Activated CD4-positive, alpha-beta T cell treated with anti-CD3 and anti-CD28 coated beads for 36 hours (primary cell): ENCODE measurements at regions of chr1 and their contacts with region 1.

Region 1: GRCh38 chr1:168439456-168440375 is 104.1 kb downstream of the XCL2 start:
- DNase-seq: peak; percentile 89
- ATAC-seq: peak; percentile 95
- H3K4me3 Mint-ChIP-seq: peak overlapping the region; percentile 42
- H3K27ac Mint-ChIP-seq: no peak overlapping the region
- H3K4me1 Mint-ChIP-seq: peaks cover 32% of the 10 kb centered on the region
- H3K27me3 Mint-ChIP-seq: no peaks in the 10 kb centered on the region

Region 2: DNA sequence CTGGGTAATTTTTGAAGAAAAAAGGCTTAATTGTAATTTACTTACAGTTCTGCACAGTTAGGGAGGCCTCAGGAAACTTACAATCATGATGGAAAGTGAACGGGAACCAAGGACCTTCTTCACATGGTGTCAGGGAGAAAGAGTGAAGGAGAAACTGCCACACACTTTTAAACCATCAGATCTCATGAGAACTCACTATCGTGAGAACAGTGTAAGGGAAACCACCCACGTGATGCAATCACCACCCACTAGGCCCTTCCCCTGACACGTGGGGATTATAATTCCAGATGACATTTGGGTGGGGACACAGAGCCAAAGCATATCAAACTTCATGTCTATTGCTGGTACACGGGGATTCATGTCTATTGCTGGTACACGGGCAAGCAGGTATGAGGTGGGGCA is 219.2 kb before region 1 on chr1:
- CTCF ChIA-PET with region 1: no interaction called
- POLR2A ChIA-PET with region 1: no interaction called
- intact Hi-C with region 1: no loop called
- DNase-seq: peak; percentile 41
- ATAC-seq: peak; percentile 58
- H3K4me3 Mint-ChIP-seq: peak overlapping the region; percentile 61
- H3K27ac Mint-ChIP-seq: peak overlapping the region; percentile 72
- H3K4me1 Mint-ChIP-seq: peaks cover 20% of the 10 kb centered on the region
- H3K27me3 Mint-ChIP-seq: peaks cover 5% of the 10 kb centered on the region

Region 3: GRCh38 chr1:168287237-168287664 is 152.5 kb before region 1 on chr1:
- CTCF ChIA-PET with region 1: no interaction called
- POLR2A ChIA-PET with region 1: no interaction called
- intact Hi-C with region 1: no loop called
- DNase-seq: no peak
- ATAC-seq: peak; percentile 96
- H3K4me3 Mint-ChIP-seq: no peak overlapping the region
- H3K27ac Mint-ChIP-seq: no peak overlapping the region
- H3K4me1 Mint-ChIP-seq: peaks cover 20% of the 10 kb centered on the region
- H3K27me3 Mint-ChIP-seq: no peaks in the 10 kb centered on the region

Region 4: DNA sequence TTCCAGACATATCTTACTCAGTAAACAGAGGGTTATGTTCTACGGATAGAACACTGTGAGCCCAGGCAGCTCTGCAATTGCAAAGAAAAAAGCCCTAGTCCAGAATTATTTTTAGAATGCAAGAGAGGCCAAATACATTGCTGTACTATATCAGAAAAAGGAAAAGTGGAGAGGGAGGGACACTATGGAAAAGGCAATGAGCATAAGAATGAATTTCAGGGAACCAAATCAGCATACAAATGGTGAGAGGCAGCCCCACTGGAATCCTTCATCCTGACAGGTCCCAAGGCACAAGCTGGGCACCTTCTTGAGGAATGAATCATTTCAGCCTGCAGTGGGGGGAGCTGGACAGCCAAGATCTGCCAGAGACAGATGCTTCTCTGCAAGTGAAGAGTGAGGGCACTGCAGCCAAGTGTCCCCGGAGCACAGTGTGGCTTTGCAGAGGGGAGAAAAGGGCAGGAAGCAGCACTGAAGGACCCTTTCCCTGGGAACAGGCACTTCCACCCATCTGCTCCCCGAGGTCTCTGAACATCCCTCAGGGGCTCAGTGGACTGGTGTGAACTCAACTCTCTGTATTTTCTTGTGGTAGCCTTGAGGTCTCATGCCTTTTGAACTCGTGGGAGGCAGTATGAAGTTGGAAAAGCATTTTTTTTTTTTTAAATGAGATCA is 11.5 kb before region 1 on chr1:
- CTCF ChIA-PET with region 1: interaction called, 11 read pairs
- POLR2A ChIA-PET with region 1: no interaction called
- intact Hi-C with region 1: no loop called
- DNase-seq: no peak
- ATAC-seq: no peak
- H3K4me3 Mint-ChIP-seq: no peak overlapping the region
- H3K27ac Mint-ChIP-seq: no peak overlapping the region
- H3K4me1 Mint-ChIP-seq: no peaks in the 10 kb centered on the region
- H3K27me3 Mint-ChIP-seq: no peaks in the 10 kb centered on the region

Region 5: DNA sequence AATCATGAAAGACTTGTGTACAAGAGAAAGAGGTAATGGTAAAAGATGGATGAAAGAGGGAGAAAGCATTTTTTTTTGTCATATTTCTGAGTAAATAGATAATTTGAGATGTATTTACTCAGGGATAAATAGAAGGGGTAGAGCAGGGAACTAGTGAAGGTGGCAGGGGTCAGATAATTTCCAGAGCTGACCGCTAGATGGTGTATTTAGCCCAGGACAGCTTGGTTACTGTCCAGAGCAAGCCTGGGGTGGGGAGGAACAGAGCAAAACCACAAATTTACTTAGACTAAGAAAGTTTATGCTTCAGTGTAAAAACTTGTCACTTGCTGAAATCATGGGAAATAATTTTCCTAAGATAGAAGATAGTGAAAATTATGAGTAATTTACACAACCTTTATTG is 12.6 kb after region 1 on chr1:
- CTCF ChIA-PET with region 1: interaction called, 28 read pairs
- POLR2A ChIA-PET with region 1: no interaction called
- intact Hi-C with region 1: no loop called
- DNase-seq: no peak
- ATAC-seq: no peak
- H3K4me3 Mint-ChIP-seq: no peak overlapping the region
- H3K27ac Mint-ChIP-seq: no peak overlapping the region
- H3K4me1 Mint-ChIP-seq: peaks cover 8% of the 10 kb centered on the region
- H3K27me3 Mint-ChIP-seq: no peaks in the 10 kb centered on the region

Region 6: GRCh38 chr1:168535536-168535935 is 95.8 kb after region 1 on chr1:
- CTCF ChIA-PET with region 1: interaction called, 15 read pairs
- POLR2A ChIA-PET with region 1: no interaction called
- intact Hi-C with region 1: no loop called
- DNase-seq: no peak
- ATAC-seq: peak; percentile 48
- H3K4me3 Mint-ChIP-seq: no peak overlapping the region
- H3K27ac Mint-ChIP-seq: peak overlapping the region; percentile 62
- H3K4me1 Mint-ChIP-seq: peaks cover 65% of the 10 kb centered on the region
- H3K27me3 Mint-ChIP-seq: no peaks in the 10 kb centered on the region

Region 7: GRCh38 chr1:168572633-168573032 is 132.9 kb after region 1 on chr1:
- CTCF ChIA-PET with region 1: interaction called, 20 read pairs
- POLR2A ChIA-PET with region 1: no interaction called
- intact Hi-C with region 1: loop called (anchors 1 kb)
- DNase-seq: no peak
- ATAC-seq: no peak
- H3K4me3 Mint-ChIP-seq: no peak overlapping the region
- H3K27ac Mint-ChIP-seq: no peak overlapping the region
- H3K4me1 Mint-ChIP-seq: peaks cover 14% of the 10 kb centered on the region
- H3K27me3 Mint-ChIP-seq: peaks cover 6% of the 10 kb centered on the region

Region 8: DNA sequence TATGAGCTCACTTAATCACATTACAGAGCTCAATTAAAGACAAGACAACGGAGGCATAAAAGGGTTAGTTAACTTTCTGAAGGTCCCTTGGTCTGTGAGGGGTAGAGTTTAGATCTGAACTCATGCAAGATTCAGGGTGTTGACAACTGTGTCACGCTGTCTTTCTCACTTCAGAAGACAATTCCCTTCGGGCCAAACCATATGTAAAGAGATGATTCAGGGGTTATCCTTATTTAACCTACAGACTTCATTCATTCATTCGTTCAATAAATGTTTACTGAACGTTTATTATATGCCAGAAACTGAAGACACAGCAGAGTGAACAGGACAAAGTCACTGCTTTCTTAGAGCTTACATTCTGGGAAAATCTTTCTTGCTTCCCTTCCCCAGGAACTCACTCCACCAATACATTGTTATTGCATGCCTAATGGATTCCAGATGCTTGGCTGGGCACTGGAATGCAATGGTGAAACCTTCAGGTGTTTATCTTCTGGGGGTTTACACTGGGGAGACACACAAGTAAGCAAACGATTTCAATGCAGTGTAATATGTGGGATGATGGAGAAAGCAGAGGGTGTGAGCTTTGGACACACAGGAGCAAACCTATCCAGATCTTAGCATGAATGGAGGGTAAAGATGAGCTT is 143.1 kb after region 1 on chr1:
- CTCF ChIA-PET with region 1: interaction called, 20 read pairs
- POLR2A ChIA-PET with region 1: no interaction called
- intact Hi-C with region 1: no loop called
- DNase-seq: no peak
- ATAC-seq: no peak
- H3K4me3 Mint-ChIP-seq: no peak overlapping the region
- H3K27ac Mint-ChIP-seq: no peak overlapping the region
- H3K4me1 Mint-ChIP-seq: no peaks in the 10 kb centered on the region
- H3K27me3 Mint-ChIP-seq: no peaks in the 10 kb centered on the region

Region 9: DNA sequence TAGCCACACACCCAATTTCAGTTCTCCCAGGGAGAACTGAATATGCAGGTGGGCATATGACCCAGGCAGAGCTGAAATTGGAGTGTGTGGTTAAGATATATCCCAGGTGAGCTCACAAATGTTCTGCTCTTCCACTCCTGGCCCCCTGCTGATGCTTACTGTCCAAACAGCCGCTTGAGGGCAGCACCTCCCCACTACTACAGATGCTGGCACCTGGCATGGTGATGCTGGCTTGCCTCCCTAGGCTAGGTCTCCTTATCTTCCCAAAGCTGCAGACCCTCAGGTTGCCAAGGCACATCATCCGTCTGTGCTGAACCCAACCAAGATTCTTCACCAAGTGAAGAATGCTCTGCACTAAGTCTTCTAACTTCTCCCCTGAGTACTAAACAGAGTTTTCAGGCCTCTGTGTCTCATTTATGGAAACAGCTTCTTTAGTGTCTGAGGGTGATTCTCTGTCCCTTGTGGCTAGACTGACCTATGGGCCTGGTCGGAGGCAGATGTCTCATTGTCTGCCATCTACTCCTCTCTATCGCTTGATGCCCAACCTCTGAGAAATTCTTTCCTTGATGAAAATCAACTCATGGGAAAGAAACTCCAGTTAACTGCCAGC is 163.9 kb after region 1 on chr1:
- CTCF ChIA-PET with region 1: interaction called, 20 read pairs
- POLR2A ChIA-PET with region 1: no interaction called
- intact Hi-C with region 1: no loop called
- DNase-seq: peak; percentile 84
- ATAC-seq: peak; percentile 78
- H3K4me3 Mint-ChIP-seq: no peak overlapping the region
- H3K27ac Mint-ChIP-seq: no peak overlapping the region
- H3K4me1 Mint-ChIP-seq: no peaks in the 10 kb centered on the region
- H3K27me3 Mint-ChIP-seq: no peaks in the 10 kb centered on the region

Region 10: GRCh38 chr1:169201084-169201619 is 761.4 kb after region 1 on chr1:
- CTCF ChIA-PET with region 1: no interaction called
- POLR2A ChIA-PET with region 1: no interaction called
- intact Hi-C with region 1: no loop called
- DNase-seq: no peak
- ATAC-seq: no peak
- H3K4me3 Mint-ChIP-seq: no peak overlapping the region
- H3K27ac Mint-ChIP-seq: no peak overlapping the region
- H3K4me1 Mint-ChIP-seq: no peaks in the 10 kb centered on the region
- H3K27me3 Mint-ChIP-seq: no peaks in the 10 kb centered on the region